Adrenal gland (tissue), 19 donors: ENCODE measurements at regions of chr2 and their contacts with region 1.

Region 1: GRCh38 chr2:187614756-187615155 is 60.5 kb upstream of the TFPI start:
- DNase-seq: no peak
- H3K4me3 ChIP-seq: no peak overlapping the region
- H3K27ac ChIP-seq: no peak overlapping the region
- H3K4me1 ChIP-seq: no peaks in the 10 kb centered on the region
- H3K27me3 ChIP-seq: no peaks in the 10 kb centered on the region
- CTCF ChIP-seq: no peak
- POLR2A ChIP-seq: no peak

Region 2: GRCh38 chr2:187826023-187826422 is 211.3 kb after region 1 on chr2:
- intact Hi-C with region 1: loop called in 1 of 2 experiments (anchors 10 kb)
- DNase-seq: no peak
- H3K4me3 ChIP-seq: no peak overlapping the region
- H3K27ac ChIP-seq: no peak overlapping the region
- H3K4me1 ChIP-seq: no peaks in the 10 kb centered on the region
- H3K27me3 ChIP-seq: no peaks in the 10 kb centered on the region
- CTCF ChIP-seq: no peak
- POLR2A ChIP-seq: no peak